ENCODE measurements at regions of chr3 and their contacts with region 1.

Region 1: GRCh38 chr3:159732172-159733111 is 256.2 kb upstream of the IL12A start:
- DNase-seq: peak; percentile 53
- H3K4me3 ChIP-seq: no peak overlapping the region
- H3K27ac ChIP-seq: no peak overlapping the region
- H3K4me1 ChIP-seq: peaks cover 28% of the 10 kb centered on the region
- H3K27me3 ChIP-seq: no peaks in the 10 kb centered on the region
- CTCF ChIP-seq: no peak
- POLR2A ChIP-seq: no peak

Region 2: DNA sequence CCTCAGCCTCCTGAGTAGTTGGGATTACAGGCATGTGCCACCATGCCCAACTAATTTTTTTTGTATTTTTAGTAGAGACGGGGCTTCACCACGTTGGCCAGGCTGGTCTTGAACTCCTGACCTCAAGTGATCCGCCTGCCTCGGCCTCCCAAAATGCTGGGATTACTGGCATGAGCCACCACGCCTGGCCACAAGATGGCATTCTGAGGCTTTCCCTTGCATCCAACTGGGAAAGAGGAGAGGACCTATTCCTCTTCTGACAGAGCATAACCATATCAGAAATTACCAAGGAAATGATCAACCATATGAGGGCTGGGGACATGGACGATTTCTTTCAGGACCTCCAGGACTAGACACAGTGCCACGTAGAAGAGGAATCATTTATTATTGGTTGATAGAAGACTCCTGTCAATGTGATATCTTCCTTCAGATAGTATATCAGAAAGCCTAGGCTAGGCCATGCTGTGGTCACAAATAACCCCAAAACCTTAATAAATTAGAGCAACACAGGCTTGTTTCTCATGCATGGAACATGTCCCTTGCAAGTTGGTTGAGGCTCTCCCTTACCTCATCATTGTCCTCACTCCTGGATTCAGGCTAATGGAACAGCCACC is 116.1 kb before region 1 on chr3:
- CTCF ChIA-PET with region 1: no interaction called
- POLR2A ChIA-PET with region 1: no interaction called
- dilution Hi-C with region 1: no loop called
- intact Hi-C with region 1: loop called (anchors 1 kb)
- DNase-seq: peak; percentile 60
- H3K4me3 ChIP-seq: no peak overlapping the region
- H3K27ac ChIP-seq: no peak overlapping the region
- H3K4me1 ChIP-seq: peaks cover 18% of the 10 kb centered on the region
- H3K27me3 ChIP-seq: no peaks in the 10 kb centered on the region
- CTCF ChIP-seq: peak; percentile 38 to 64
- POLR2A ChIP-seq: no peak

Region 3: DNA sequence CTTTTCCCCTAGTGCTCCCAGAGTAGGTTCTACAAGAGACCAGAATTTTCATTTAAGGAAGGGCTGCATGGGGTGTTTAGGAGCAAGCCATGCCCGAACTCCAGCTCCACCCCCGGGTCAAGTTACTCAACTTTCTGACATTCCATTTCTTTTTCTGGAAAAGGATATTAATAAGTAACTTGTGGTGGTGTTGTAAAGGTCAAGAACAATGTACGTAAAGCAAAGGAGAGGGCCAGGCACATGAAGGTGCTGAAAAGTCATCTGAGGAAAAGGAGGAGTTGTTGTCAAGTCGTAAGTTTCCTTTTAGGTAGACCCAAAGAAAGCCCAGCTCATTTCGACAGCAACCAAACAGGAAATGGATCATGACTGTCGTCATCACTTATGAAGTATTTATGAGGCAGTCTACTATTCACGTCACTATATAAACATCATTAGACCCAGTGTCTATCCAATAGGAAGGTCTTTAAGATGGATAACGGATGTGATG is 63.4 kb before region 1 on chr3:
- CTCF ChIA-PET with region 1: no interaction called
- POLR2A ChIA-PET with region 1: no interaction called
- dilution Hi-C with region 1: no loop called
- intact Hi-C with region 1: no loop called
- DNase-seq: peak; percentile 33
- H3K4me3 ChIP-seq: no peak overlapping the region
- H3K27ac ChIP-seq: no peak overlapping the region
- H3K4me1 ChIP-seq: no peaks in the 10 kb centered on the region
- H3K27me3 ChIP-seq: peaks cover 0 to 2% of the 10 kb centered on the region in 2 experiments
- CTCF ChIP-seq: no peak
- POLR2A ChIP-seq: no peak